Panc1 (cell line): ENCODE measurements at regions of chr5 and their contacts with region 1.

Region 1: GRCh38 chr5:145681686-145682085 is 153.5 kb downstream of the PRELID2 start:
- DNase-seq: peak; percentile 58
- ATAC-seq: peak; percentile 94
- H3K4me3 ChIP-seq: no peak overlapping the region
- H3K27ac ChIP-seq: peak overlapping the region; percentile 45; the same call in 1 of the 2 replicates
- H3K4me1 ChIP-seq: no peaks in the 10 kb centered on the region; the same call in 1 of the 2 replicates
- H3K27me3 ChIP-seq: no peaks in the 10 kb centered on the region
- CTCF ChIP-seq: peak; percentile 79

Region 2: DNA sequence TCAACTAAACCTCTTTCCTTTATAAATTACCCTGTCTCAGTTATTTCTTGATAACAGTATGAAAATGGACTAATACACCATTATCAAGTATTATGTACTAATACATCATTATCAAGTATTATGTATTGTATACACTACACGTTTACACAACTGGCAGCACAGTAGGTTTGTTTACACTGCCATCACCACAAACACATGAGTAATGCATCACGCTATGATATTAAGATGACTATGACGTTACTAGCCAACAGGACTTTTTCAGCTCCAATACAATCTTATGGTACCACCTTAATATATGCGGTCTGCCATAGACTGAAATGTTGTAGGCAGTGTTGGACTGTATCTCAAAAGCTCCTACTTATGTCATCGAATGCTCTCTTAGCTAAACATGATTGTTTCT is 125.2 kb after region 1 on chr5:
- CTCF ChIA-PET with region 1: interaction called, 3 read pairs
- POLR2A ChIA-PET with region 1: no interaction called
- in situ Hi-C with region 1: no loop called
- intact Hi-C with region 1: loop called (anchors 5 kb)
- DNase-seq: peak; percentile 64
- ATAC-seq: peak; percentile 63
- H3K4me3 ChIP-seq: no peak overlapping the region
- H3K27ac ChIP-seq: no peak overlapping the region
- H3K4me1 ChIP-seq: no peaks in the 10 kb centered on the region
- H3K27me3 ChIP-seq: no peaks in the 10 kb centered on the region
- CTCF ChIP-seq: no peak

Region 3: GRCh38 chr5:145825751-145826180 is 144.1 kb after region 1 on chr5:
- CTCF ChIA-PET with region 1: no interaction called
- POLR2A ChIA-PET with region 1: no interaction called
- in situ Hi-C with region 1: no loop called
- intact Hi-C with region 1: loop called (anchors 2 kb)
- DNase-seq: no peak
- ATAC-seq: peak; percentile 78
- H3K4me3 ChIP-seq: no peak overlapping the region
- H3K27ac ChIP-seq: no peak overlapping the region
- H3K4me1 ChIP-seq: peaks cover 21% of the 10 kb centered on the region; the same call in 1 of the 2 replicates
- H3K27me3 ChIP-seq: no peaks in the 10 kb centered on the region
- CTCF ChIP-seq: peak; percentile 80

Region 4: DNA sequence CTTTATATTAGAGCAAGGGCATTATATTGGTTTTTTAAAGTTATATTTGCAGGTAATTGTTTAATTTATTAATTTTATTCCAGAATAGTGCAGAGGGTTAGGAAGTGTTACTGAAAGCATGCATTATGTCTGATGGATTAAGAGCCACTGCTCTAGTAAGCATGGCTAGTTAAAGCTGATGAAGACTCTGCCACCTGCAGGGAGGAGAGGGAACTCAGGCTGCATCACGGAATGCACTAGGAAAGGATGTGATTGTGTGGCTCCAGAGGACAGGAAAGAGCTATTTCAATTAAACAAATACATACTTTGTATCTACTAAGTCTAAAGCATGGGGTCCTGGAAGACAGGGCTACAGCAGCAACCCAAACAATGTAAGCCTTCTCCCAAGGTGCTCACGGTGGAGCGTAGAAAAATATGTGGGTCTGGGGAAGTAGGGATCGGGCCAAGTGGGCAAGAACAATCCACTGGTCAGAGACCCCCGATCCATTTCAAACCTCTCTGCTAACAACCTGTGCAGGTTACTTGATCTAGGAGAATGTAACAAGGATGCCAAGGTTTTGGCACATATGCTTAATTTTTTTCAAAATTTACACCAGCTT is 206.4 kb after region 1 on chr5:
- CTCF ChIA-PET with region 1: interaction called, 4 read pairs
- POLR2A ChIA-PET with region 1: no interaction called
- in situ Hi-C with region 1: no loop called
- intact Hi-C with region 1: loop called (anchors 5 kb)
- DNase-seq: peak; percentile 50
- ATAC-seq: peak; percentile 98
- H3K4me3 ChIP-seq: no peak overlapping the region
- H3K27ac ChIP-seq: no peak overlapping the region
- H3K4me1 ChIP-seq: 0 out of 2 replicates have a peak, but pooled peaks cover 2% of the 10 kb centered on the region
- H3K27me3 ChIP-seq: no peaks in the 10 kb centered on the region
- CTCF ChIP-seq: peak; percentile 88

Region 5: DNA sequence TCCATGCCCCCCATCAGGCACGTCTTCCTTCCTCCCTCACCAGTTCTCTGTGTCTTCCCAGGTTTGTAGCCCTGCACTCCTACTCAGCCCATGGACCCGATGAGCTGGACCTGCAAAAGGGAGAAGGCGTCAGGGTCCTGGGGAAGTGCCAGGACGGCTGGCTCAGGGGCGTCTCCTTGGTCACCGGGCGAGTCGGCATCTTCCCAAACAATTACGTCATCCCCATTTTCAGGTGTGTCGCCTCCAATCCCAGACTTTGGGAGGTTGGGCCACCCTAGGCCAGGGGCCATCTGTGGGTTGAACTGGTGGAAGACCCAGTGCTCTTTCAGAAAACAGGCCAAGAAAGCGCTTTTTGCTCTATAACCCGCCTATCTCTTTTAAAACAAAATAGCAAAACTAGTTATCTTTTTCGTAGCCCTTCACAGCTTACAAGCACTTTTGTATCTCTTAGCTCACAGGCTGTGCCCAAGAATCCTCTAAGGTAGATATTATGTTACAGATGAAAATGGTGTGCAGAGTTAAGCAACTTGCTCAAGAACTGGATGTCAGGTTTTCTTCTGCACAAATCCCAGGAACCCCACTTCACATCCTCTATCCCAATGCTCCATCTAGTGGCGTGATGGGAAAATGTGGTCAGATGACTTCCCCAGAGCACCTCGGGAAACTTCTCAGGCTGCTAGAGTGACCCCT is 367.5 kb after region 1 on chr5:
- CTCF ChIA-PET with region 1: no interaction called
- POLR2A ChIA-PET with region 1: no interaction called
- in situ Hi-C with region 1: no loop called
- intact Hi-C with region 1: no loop called
- DNase-seq: peak; percentile 22
- ATAC-seq: peak; percentile 82
- H3K4me3 ChIP-seq: no peak overlapping the region
- H3K27ac ChIP-seq: no peak overlapping the region
- H3K4me1 ChIP-seq: no peaks in the 10 kb centered on the region
- H3K27me3 ChIP-seq: no peaks in the 10 kb centered on the region
- CTCF ChIP-seq: peak; percentile 81